ENCODE measurements at regions of chr11 and their contacts with region 1.

Region 1: GRCh38 chr11:111598559-111598958 is 3.7 kb upstream of the SIK2 start:
- DNase-seq: no peak
- ATAC-seq: no peak
- H3K4me3 ChIP-seq: no peak overlapping the region
- H3K4me3 Mint-ChIP-seq: no peak overlapping the region
- H3K27ac ChIP-seq: no peak overlapping the region
- H3K27ac Mint-ChIP-seq: no peak overlapping the region
- H3K4me1 ChIP-seq: peaks cover 4 to 17% of the 10 kb centered on the region in 2 experiments
- H3K4me1 Mint-ChIP-seq: peaks cover 7 to 15% (median 12%) of the 10 kb centered on the region in 3 donors
- H3K27me3 ChIP-seq: no peaks in the 10 kb centered on the region
- H3K27me3 Mint-ChIP-seq: peaks cover 0 to 9% of the 10 kb centered on the region in 2 donors

Region 2: DNA sequence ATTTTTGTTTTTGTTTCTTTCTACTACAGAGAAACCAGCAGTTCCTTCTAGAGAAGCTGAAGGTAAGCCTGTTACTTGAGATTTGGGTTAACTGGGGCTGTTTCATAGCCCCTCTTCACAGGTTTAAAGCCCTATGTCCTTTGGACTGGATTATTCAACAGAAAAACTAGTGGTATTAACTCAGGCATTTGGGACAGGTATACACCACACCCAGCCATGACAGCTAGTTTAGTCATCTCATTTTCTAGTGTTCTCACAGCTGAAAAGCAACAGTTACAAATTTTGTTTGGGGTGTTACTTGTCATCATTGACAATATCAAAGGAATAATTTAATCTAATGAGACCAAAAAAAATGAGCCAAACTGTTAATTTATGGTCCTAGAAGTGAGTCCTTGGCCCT is 44.0 kb before region 1 on chr11:
- CTCF ChIA-PET with region 1: no interaction called
- POLR2A ChIA-PET with region 1: no interaction called
- DNase-seq: no peak
- ATAC-seq: no peak
- H3K4me3 ChIP-seq: no peak overlapping the region
- H3K4me3 Mint-ChIP-seq: no peak overlapping the region
- H3K27ac ChIP-seq: no peak overlapping the region
- H3K27ac Mint-ChIP-seq: no peak overlapping the region
- H3K4me1 ChIP-seq: no peaks in the 10 kb centered on the region
- H3K4me1 Mint-ChIP-seq: no peaks in the 10 kb centered on the region
- H3K27me3 ChIP-seq: peaks cover 0 to under 1% of the 10 kb centered on the region in 2 experiments
- H3K27me3 Mint-ChIP-seq: peaks cover 7 to 9% of the 10 kb centered on the region in 2 donors

Region 3: DNA sequence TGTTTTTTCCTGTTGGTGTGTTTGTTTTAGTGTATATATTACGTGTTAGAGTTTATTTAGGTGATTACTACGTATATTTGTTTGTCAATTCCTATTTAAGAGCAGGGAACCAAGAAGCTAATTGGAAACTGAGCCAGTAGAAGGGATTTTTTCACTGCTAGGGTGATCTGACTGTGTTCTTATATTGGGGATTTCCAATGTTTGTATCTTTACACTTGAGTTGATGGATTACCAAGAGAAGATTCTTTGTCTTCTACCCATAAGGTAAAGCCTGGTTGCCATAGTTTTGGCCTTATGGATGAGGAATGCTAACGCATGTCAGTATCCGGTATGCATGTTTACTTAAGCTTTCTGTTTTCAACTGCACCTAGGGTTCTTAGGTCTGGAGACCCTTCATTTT is 39.3 kb after region 1 on chr11:
- CTCF ChIA-PET with region 1: no interaction called
- POLR2A ChIA-PET with region 1: interaction called in 1 of 2 experiments, 10 read pairs
- DNase-seq: no peak
- ATAC-seq: no peak
- H3K4me3 ChIP-seq: no peak overlapping the region
- H3K4me3 Mint-ChIP-seq: no peak overlapping the region
- H3K27ac ChIP-seq: no peak overlapping the region
- H3K27ac Mint-ChIP-seq: no peak overlapping the region
- H3K4me1 ChIP-seq: peaks cover 0 to 2% of the 10 kb centered on the region in 2 experiments
- H3K4me1 Mint-ChIP-seq: peaks cover 32 to 41% (median 34%) of the 10 kb centered on the region in 3 donors
- H3K27me3 ChIP-seq: no peaks in the 10 kb centered on the region
- H3K27me3 Mint-ChIP-seq: no peaks in the 10 kb centered on the region

Measured in T-cell (primary cell).